Activated naive CD4-positive, alpha-beta T cell treated with anti-CD3 and anti-CD28 coated beads for 36 hours (primary cell): ENCODE measurements at regions of chr1 and their contacts with region 1.

Region 1: GRCh38 chr1:92080128-92080985 is at the start of gene BTBD8:
- DNase-seq: peak; percentile 90
- H3K4me3 Mint-ChIP-seq: peak within 1 kb of the TSS; percentile 93
- H3K27ac Mint-ChIP-seq: peak within 1 kb of the TSS; percentile 80
- H3K4me1 Mint-ChIP-seq: peaks cover 9% of the 10 kb centered on the region
- H3K27me3 Mint-ChIP-seq: no peaks in the 10 kb centered on the region
- total RNA-seq, gene BTBD8: 2.0 to 2.7 TPM

Region 2: DNA sequence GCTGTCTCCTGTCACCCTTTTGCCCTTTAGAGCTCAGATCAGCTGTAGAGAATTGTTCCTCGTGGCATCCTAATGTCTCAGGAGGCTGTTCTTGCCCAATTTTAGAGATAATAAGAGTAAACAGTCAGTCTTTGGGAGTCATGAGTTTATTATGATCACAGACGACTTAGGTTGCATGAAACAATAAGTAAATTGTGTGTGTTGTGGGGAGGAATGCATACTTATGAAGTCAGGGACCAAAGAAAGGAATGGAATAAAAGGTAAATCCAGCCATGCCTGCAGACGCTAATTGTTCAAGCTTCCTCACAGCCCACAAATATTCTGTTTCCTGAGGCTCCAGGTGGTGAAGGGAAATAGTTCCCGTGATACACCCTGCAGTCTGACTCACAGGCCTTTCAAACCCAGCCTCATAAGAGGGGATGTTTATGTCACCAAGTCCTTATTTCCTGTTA is 49.7 kb before region 1 on chr1:
- CTCF ChIA-PET with region 1: no interaction called
- intact Hi-C with region 1: loop called (anchors 1 kb)
- DNase-seq: peak; percentile 47
- H3K4me3 Mint-ChIP-seq: peak overlapping the region; percentile 66
- H3K27ac Mint-ChIP-seq: no peak overlapping the region
- H3K4me1 Mint-ChIP-seq: peaks cover 21% of the 10 kb centered on the region
- H3K27me3 Mint-ChIP-seq: peaks cover 24% of the 10 kb centered on the region

Region 3: GRCh38 chr1:92123868-92124267 is 43.5 kb after region 1 on chr1:
- CTCF ChIA-PET with region 1: interaction called, 3 read pairs
- intact Hi-C with region 1: loop called (anchors 2 kb)
- DNase-seq: peak; percentile 29
- H3K4me3 Mint-ChIP-seq: peak overlapping the region; percentile 42
- H3K27ac Mint-ChIP-seq: peak overlapping the region; percentile 62
- H3K4me1 Mint-ChIP-seq: peaks cover 13% of the 10 kb centered on the region
- H3K27me3 Mint-ChIP-seq: no peaks in the 10 kb centered on the region

Region 4: DNA sequence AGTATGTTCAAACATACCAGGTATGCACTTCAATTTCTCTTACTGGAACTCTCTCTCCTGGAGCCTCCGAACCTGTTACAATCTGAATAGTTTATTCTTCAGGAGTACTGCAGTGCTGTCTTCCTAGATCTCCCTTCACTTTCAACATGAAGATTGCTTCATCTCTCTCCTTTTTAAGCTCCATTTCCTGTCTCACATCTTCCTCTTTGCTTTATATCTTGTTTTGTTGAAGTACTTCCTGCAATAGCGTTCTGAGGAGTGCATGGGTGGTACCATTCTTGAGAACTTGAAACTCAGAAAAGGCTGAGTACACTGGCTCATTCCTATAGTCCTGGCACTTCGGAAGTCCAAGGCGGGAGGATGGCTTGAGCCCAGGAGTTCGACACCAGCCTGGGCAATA is 121.6 kb after region 1 on chr1:
- CTCF ChIA-PET with region 1: no interaction called
- intact Hi-C with region 1: loop called (anchors 5 kb)
- DNase-seq: no peak
- H3K4me3 Mint-ChIP-seq: no peak overlapping the region
- H3K27ac Mint-ChIP-seq: peak overlapping the region; percentile 51
- H3K4me1 Mint-ChIP-seq: peaks cover 21% of the 10 kb centered on the region
- H3K27me3 Mint-ChIP-seq: no peaks in the 10 kb centered on the region